ENCODE measurements at regions of chr6 and their contacts with region 1.

Region 1: GRCh38 chr6:47413752-47414422 is 63.7 kb upstream of the CD2AP start:
- DNase-seq: peak; percentile 79
- ATAC-seq: peak; percentile 76
- H3K4me3 ChIP-seq: peak overlapping the region; percentile 46 to 83 (median 58)
- H3K4me3 Mint-ChIP-seq: peak overlapping the region; percentile 84
- H3K27ac ChIP-seq: peak overlapping the region in 1 of 2 donors; percentile 48
- H3K27ac Mint-ChIP-seq: peak overlapping the region; percentile 71
- H3K4me1 ChIP-seq: peaks cover 13 to 17% of the 10 kb centered on the region in 2 donors
- H3K4me1 Mint-ChIP-seq: peaks cover 16% of the 10 kb centered on the region
- H3K27me3 ChIP-seq: no peaks in the 10 kb centered on the region
- H3K27me3 Mint-ChIP-seq: peaks cover 3% of the 10 kb centered on the region
- CTCF ChIP-seq: peak; percentile 95

Region 2: GRCh38 chr6:47146428-47147174 is 267.3 kb before region 1 on chr6:
- CTCF ChIA-PET with region 1: no interaction called
- POLR2A ChIA-PET with region 1: no interaction called
- intact Hi-C with region 1: no loop called
- DNase-seq: no peak
- ATAC-seq: no peak
- H3K4me3 ChIP-seq: no peak overlapping the region
- H3K4me3 Mint-ChIP-seq: no peak overlapping the region
- H3K27ac ChIP-seq: no peak overlapping the region
- H3K27ac Mint-ChIP-seq: no peak overlapping the region
- H3K4me1 ChIP-seq: no peaks in the 10 kb centered on the region
- H3K4me1 Mint-ChIP-seq: no peaks in the 10 kb centered on the region
- H3K27me3 ChIP-seq: no peaks in the 10 kb centered on the region
- H3K27me3 Mint-ChIP-seq: peaks cover 17% of the 10 kb centered on the region
- CTCF ChIP-seq: no peak

Region 3: DNA sequence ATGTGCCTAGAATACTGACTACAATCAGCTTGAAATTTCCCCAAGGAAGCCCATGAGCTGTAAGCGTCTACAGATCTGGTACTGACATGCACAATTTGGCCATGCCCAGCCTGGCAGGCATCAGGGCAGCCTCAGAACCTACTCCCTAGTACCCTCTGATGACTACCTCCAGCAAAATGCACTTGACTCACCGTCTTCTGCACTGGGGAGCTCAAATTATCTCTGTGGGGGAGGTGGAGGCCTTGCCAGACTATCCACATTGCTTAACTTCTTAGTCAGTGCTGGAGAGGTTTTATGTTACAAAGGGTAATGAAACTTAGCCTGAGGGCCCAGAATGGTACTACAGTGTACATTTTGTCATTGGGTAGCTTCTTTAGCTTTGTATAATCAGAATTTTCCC is 245.7 kb before region 1 on chr6:
- CTCF ChIA-PET with region 1: no interaction called
- POLR2A ChIA-PET with region 1: no interaction called
- intact Hi-C with region 1: no loop called
- DNase-seq: no peak
- ATAC-seq: no peak
- H3K4me3 ChIP-seq: no peak overlapping the region
- H3K4me3 Mint-ChIP-seq: no peak overlapping the region
- H3K27ac ChIP-seq: no peak overlapping the region
- H3K27ac Mint-ChIP-seq: no peak overlapping the region
- H3K4me1 ChIP-seq: no peaks in the 10 kb centered on the region
- H3K4me1 Mint-ChIP-seq: peaks cover 4% of the 10 kb centered on the region
- H3K27me3 ChIP-seq: no peaks in the 10 kb centered on the region
- H3K27me3 Mint-ChIP-seq: no peaks in the 10 kb centered on the region
- CTCF ChIP-seq: no peak

Region 4: DNA sequence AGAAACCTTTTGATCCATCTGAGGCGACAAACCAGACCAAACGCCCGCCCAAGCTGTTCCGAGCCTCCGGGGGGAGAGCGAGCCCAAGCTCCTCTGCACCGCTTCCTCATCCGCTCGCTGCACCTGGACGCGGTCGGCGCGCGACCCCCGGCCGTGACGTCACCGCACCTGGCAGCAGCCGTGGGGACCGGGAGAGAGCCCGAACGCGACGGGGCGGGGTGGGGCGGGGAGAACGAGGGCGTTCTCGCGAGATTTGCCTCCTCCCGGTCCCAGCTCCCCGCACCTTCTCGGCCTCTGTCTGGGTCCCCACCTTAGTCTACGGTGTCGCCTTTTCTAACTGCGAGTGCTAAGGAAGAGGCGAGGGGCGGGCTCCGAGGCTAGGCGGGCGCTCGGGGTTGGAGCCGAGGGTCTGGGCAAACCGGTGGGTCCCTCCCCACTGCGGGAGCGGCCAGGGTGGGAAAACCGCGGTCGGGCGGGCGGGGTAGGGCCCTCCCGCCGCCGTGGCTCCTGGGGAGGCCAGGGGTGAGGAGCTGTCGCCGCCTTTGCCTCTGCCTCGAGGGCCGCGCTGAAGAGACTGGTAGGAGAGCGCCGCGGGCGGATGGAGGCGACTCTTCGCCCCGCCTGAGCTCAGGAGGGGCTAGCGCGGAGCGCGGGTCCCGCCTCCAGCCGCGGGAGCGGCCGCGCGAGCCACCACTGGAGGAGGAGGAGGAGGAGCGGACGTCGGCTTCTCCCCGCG is 63.8 kb after region 1 on chr6 and contains the start of gene CD2AP:
- CTCF ChIA-PET with region 1: interaction called, 28 read pairs
- POLR2A ChIA-PET with region 1: interaction called, 3 read pairs
- intact Hi-C with region 1: loop called (anchors 1 kb)
- DNase-seq: peak; percentile 97
- ATAC-seq: peak; percentile 87
- H3K4me3 ChIP-seq: peak within 1 kb of the TSS; percentile 79 to 92 (median 91)
- H3K4me3 Mint-ChIP-seq: peak within 1 kb of the TSS; percentile 93
- H3K27ac ChIP-seq: peak within 1 kb of the TSS; percentile 94 to 97
- H3K27ac Mint-ChIP-seq: peak within 1 kb of the TSS; percentile 93
- H3K4me1 ChIP-seq: peaks cover 18 to 21% of the 10 kb centered on the region in 2 donors
- H3K4me1 Mint-ChIP-seq: peaks cover 35% of the 10 kb centered on the region
- H3K27me3 ChIP-seq: no peaks in the 10 kb centered on the region
- H3K27me3 Mint-ChIP-seq: no peaks in the 10 kb centered on the region
- CTCF ChIP-seq: no peak
- total RNA-seq, gene CD2AP: 43.3 and 46.9 TPM in 2 replicates

Region 5: DNA sequence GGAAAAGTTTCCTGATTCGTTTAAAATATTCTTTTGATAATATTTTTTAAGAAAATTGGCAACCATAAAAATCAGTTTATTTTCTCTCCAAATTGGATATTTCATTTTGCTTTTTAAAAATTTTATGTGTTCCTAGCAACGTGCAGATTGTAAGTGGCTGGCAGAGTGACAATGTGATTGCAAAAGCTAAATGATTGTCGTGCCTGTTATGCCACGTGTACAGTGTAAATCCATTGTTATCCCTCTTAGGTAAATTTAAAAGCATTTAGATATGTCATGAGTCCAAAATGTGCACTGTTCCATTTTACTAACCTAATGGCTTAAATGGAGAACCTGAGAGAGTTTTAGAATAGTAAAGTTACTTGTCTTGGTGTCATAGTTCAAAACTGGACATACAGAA is 190.1 kb after region 1 on chr6:
- CTCF ChIA-PET with region 1: interaction called, 5 read pairs
- POLR2A ChIA-PET with region 1: no interaction called
- intact Hi-C with region 1: loop called (anchors 10 kb)
- DNase-seq: no peak
- ATAC-seq: no peak
- H3K4me3 ChIP-seq: no peak overlapping the region
- H3K4me3 Mint-ChIP-seq: no peak overlapping the region
- H3K27ac ChIP-seq: no peak overlapping the region
- H3K27ac Mint-ChIP-seq: no peak overlapping the region
- H3K4me1 ChIP-seq: no peaks in the 10 kb centered on the region
- H3K4me1 Mint-ChIP-seq: no peaks in the 10 kb centered on the region
- H3K27me3 ChIP-seq: no peaks in the 10 kb centered on the region
- H3K27me3 Mint-ChIP-seq: no peaks in the 10 kb centered on the region
- CTCF ChIP-seq: no peak

Region 6: GRCh38 chr6:47733879-47734558 is 320.1 kb after region 1 on chr6:
- CTCF ChIA-PET with region 1: interaction called, 18 read pairs
- POLR2A ChIA-PET with region 1: no interaction called
- intact Hi-C with region 1: loop called (anchors 1 kb)
- DNase-seq: peak; percentile 34
- ATAC-seq: no peak
- H3K4me3 ChIP-seq: no peak overlapping the region
- H3K4me3 Mint-ChIP-seq: no peak overlapping the region
- H3K27ac ChIP-seq: no peak overlapping the region
- H3K27ac Mint-ChIP-seq: no peak overlapping the region
- H3K4me1 ChIP-seq: no peaks in the 10 kb centered on the region
- H3K4me1 Mint-ChIP-seq: no peaks in the 10 kb centered on the region
- H3K27me3 ChIP-seq: no peaks in the 10 kb centered on the region
- H3K27me3 Mint-ChIP-seq: peaks cover 8% of the 10 kb centered on the region
- CTCF ChIP-seq: peak; percentile 30

Region 7: GRCh38 chr6:47787620-47788497 is 374.0 kb after region 1 on chr6:
- CTCF ChIA-PET with region 1: interaction called, 24 read pairs
- POLR2A ChIA-PET with region 1: no interaction called
- intact Hi-C with region 1: no loop called
- DNase-seq: peak; percentile 55
- ATAC-seq: peak; percentile 36
- H3K4me3 ChIP-seq: no peak overlapping the region
- H3K4me3 Mint-ChIP-seq: no peak overlapping the region
- H3K27ac ChIP-seq: no peak overlapping the region
- H3K27ac Mint-ChIP-seq: no peak overlapping the region
- H3K4me1 ChIP-seq: peaks cover 0 to 4% of the 10 kb centered on the region in 2 donors
- H3K4me1 Mint-ChIP-seq: peaks cover 4% of the 10 kb centered on the region
- H3K27me3 ChIP-seq: peaks cover 0 to 15% (median 1%) of the 10 kb centered on the region in 4 experiments
- H3K27me3 Mint-ChIP-seq: peaks cover 25% of the 10 kb centered on the region
- CTCF ChIP-seq: peak; percentile 88

Measured in B cell (primary cell).